ENCODE measurements at regions of chr21 and their contacts with region 1.

Region 1: GRCh38 chr21:31107871-31108270 is 69.6 kb upstream of the KRTAP19-8 start:
- DNase-seq: no peak
- ATAC-seq: peak; percentile 16; the same call in 1 of the 2 replicates
- H3K4me3 ChIP-seq: no peak overlapping the region
- H3K27ac ChIP-seq: no peak overlapping the region
- H3K4me1 ChIP-seq: peaks cover 6% of the 10 kb centered on the region
- H3K27me3 ChIP-seq: no peaks in the 10 kb centered on the region
- CTCF ChIP-seq: no peak
- POLR2A ChIP-seq: no peak
- RAD21 ChIP-seq: no peak

Region 2: DNA sequence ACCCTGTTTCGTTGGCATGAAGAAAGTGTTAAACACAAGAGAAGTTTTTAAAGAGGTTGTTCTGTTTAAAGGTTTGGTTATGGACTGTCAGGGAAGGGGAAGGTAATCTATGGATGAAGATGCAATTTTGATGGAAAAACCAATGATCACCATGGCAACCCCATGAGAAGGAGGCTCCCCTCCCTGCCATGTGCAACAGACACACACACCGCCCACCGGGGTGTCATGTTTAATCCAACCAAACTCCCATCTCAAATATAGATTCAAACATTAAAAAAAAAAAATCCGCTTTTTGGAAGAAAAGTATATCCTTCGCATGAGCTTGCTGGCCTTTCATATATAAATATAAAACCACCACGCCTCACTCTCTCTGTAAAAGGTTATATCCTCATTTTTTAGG is 11.3 kb after region 1 on chr21:
- CTCF ChIA-PET with region 1: interaction called, 10 read pairs
- POLR2A ChIA-PET with region 1: no interaction called
- dilution Hi-C with region 1: no loop called
- in situ Hi-C with region 1: no loop called
- intact Hi-C with region 1: no loop called
- DNase-seq: no peak
- ATAC-seq: no peak
- H3K4me3 ChIP-seq: no peak overlapping the region
- H3K27ac ChIP-seq: no peak overlapping the region
- H3K4me1 ChIP-seq: peaks cover 5% of the 10 kb centered on the region; the same call in 1 of the 2 replicates
- H3K27me3 ChIP-seq: no peaks in the 10 kb centered on the region
- CTCF ChIP-seq: no peak
- POLR2A ChIP-seq: no peak
- RAD21 ChIP-seq: no peak

Region 3: GRCh38 chr21:31180256-31181081 is 72.6 kb after region 1 on chr21:
- CTCF ChIA-PET with region 1: interaction called, 15 read pairs
- POLR2A ChIA-PET with region 1: no interaction called
- dilution Hi-C with region 1: no loop called
- in situ Hi-C with region 1: no loop called
- intact Hi-C with region 1: loop called (anchors 2 kb)
- DNase-seq: peak; percentile 54
- ATAC-seq: peak; percentile 82
- H3K4me3 ChIP-seq: no peak overlapping the region
- H3K27ac ChIP-seq: no peak overlapping the region
- H3K4me1 ChIP-seq: no peaks in the 10 kb centered on the region
- H3K27me3 ChIP-seq: no peaks in the 10 kb centered on the region
- CTCF ChIP-seq: peak; percentile 65
- POLR2A ChIP-seq: no peak
- RAD21 ChIP-seq: peak; percentile 63